CD4-positive, alpha-beta T cell (primary cell): ENCODE measurements at regions of chr9 and their contacts with region 1.

Region 1: GRCh38 chr9:121169094-121169601 is 32.5 kb downstream of the RAB14 start:
- DNase-seq: peak in 7 of 14 experiments; percentile 1 to 60 (median 31)
- ATAC-seq: peak; percentile 95
- H3K4me3 ChIP-seq: no peak overlapping the region
- H3K4me3 Mint-ChIP-seq: peak overlapping the region; percentile 2
- H3K27ac ChIP-seq: peak overlapping the region; percentile 0 to 3
- H3K27ac Mint-ChIP-seq: peak overlapping the region; percentile 80
- H3K4me1 ChIP-seq: peaks cover 11% of the 10 kb centered on the region
- H3K4me1 Mint-ChIP-seq: peaks cover 27% of the 10 kb centered on the region
- H3K27me3 ChIP-seq: no peaks in the 10 kb centered on the region
- H3K27me3 Mint-ChIP-seq: no peaks in the 10 kb centered on the region
- CTCF ChIP-seq: peak; percentile 66

Region 2: GRCh38 chr9:119961774-119962424 is 1207.2 kb before region 1 on chr9:
- CTCF ChIA-PET with region 1: no interaction called
- POLR2A ChIA-PET with region 1: no interaction called
- intact Hi-C with region 1: no loop called
- DNase-seq: no peak
- ATAC-seq: no peak
- H3K4me3 ChIP-seq: no peak overlapping the region
- H3K4me3 Mint-ChIP-seq: no peak overlapping the region
- H3K27ac ChIP-seq: no peak overlapping the region
- H3K27ac Mint-ChIP-seq: no peak overlapping the region
- H3K4me1 ChIP-seq: no peaks in the 10 kb centered on the region
- H3K4me1 Mint-ChIP-seq: no peaks in the 10 kb centered on the region
- H3K27me3 ChIP-seq: peaks cover 0 to 2% of the 10 kb centered on the region in 2 experiments
- H3K27me3 Mint-ChIP-seq: peaks cover 17% of the 10 kb centered on the region
- CTCF ChIP-seq: no peak

Region 3: GRCh38 chr9:120383999-120384924 is 784.9 kb before region 1 on chr9:
- CTCF ChIA-PET with region 1: no interaction called
- POLR2A ChIA-PET with region 1: no interaction called
- intact Hi-C with region 1: no loop called
- DNase-seq: peak in 1 of 14 experiments; percentile 16
- ATAC-seq: no peak
- H3K4me3 ChIP-seq: no peak overlapping the region
- H3K4me3 Mint-ChIP-seq: no peak overlapping the region
- H3K27ac ChIP-seq: no peak overlapping the region
- H3K27ac Mint-ChIP-seq: no peak overlapping the region
- H3K4me1 ChIP-seq: no peaks in the 10 kb centered on the region
- H3K4me1 Mint-ChIP-seq: no peaks in the 10 kb centered on the region
- H3K27me3 ChIP-seq: no peaks in the 10 kb centered on the region
- H3K27me3 Mint-ChIP-seq: no peaks in the 10 kb centered on the region
- CTCF ChIP-seq: no peak

Region 4: DNA sequence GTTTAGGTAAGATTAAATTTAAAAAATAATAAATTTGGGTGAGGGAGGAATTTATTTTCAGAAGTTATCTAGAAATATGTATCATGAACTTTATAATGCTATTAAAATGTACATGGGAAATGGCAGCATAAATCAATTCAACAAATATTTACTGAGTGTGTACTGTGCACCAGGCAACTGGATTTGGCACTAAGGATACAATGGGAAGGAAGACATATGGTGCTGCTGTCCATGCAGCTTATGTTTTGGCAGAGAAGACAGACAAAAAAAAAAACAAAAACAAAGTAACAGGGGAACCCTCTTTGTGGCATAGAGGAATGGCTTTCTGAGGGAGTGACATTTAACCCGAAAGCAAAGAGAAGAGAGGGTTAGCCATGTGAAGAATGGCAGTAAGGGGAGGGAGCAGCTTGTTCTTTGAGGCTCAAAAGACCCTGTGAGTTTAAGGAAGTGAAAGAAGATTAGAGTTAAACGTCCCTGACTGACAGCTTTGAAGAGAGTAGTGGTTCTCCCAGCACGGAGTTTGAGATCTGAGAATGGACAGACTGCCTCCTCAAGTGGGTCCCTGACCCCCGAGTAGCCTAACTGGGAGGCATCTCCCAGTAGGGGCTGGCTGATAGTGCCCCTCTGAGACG is 70.5 kb before region 1 on chr9:
- CTCF ChIA-PET with region 1: no interaction called
- POLR2A ChIA-PET with region 1: no interaction called
- intact Hi-C with region 1: no loop called
- DNase-seq: no peak
- ATAC-seq: no peak
- H3K4me3 ChIP-seq: no peak overlapping the region
- H3K4me3 Mint-ChIP-seq: no peak overlapping the region
- H3K27ac ChIP-seq: no peak overlapping the region
- H3K27ac Mint-ChIP-seq: no peak overlapping the region
- H3K4me1 ChIP-seq: no peaks in the 10 kb centered on the region
- H3K4me1 Mint-ChIP-seq: no peaks in the 10 kb centered on the region
- H3K27me3 ChIP-seq: no peaks in the 10 kb centered on the region
- H3K27me3 Mint-ChIP-seq: no peaks in the 10 kb centered on the region
- CTCF ChIP-seq: no peak

Region 5: GRCh38 chr9:121156263-121156731 is 12.9 kb before region 1 on chr9:
- CTCF ChIA-PET with region 1: interaction called, 6 read pairs
- POLR2A ChIA-PET with region 1: interaction called, 3 read pairs
- intact Hi-C with region 1: loop called in 1 of 2 experiments (anchors 2 kb)
- DNase-seq: peak in 3 of 14 experiments; percentile 16 to 50 (median 21)
- ATAC-seq: peak; percentile 48
- H3K4me3 ChIP-seq: no peak overlapping the region
- H3K4me3 Mint-ChIP-seq: no peak overlapping the region
- H3K27ac ChIP-seq: no peak overlapping the region
- H3K27ac Mint-ChIP-seq: peak overlapping the region; percentile 74
- H3K4me1 ChIP-seq: no peaks in the 10 kb centered on the region
- H3K4me1 Mint-ChIP-seq: peaks cover 28% of the 10 kb centered on the region
- H3K27me3 ChIP-seq: no peaks in the 10 kb centered on the region
- H3K27me3 Mint-ChIP-seq: no peaks in the 10 kb centered on the region
- CTCF ChIP-seq: no peak

Region 6: DNA sequence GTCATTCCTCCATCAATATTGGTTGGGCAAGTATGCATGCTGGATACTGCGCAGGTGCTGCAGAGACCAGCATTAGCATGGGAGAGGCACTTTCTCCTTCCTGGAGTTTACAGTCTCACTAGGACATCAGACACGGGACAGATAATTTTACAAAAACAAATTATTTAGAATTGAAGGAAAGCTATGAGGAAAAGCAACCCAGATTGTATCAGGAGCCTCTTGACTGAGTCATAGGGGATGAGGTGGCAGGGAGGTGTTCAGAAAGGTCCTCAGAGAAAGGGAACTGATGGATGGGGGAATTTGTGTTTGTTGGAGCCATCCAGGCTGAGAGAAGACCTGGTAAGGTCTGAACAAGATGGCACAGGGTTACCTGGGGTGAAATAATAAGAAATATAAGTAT is 57.0 kb after region 1 on chr9:
- CTCF ChIA-PET with region 1: no interaction called
- POLR2A ChIA-PET with region 1: no interaction called
- intact Hi-C with region 1: no loop called
- DNase-seq: no peak
- ATAC-seq: no peak
- H3K4me3 ChIP-seq: no peak overlapping the region
- H3K4me3 Mint-ChIP-seq: no peak overlapping the region
- H3K27ac ChIP-seq: no peak overlapping the region
- H3K27ac Mint-ChIP-seq: no peak overlapping the region
- H3K4me1 ChIP-seq: no peaks in the 10 kb centered on the region
- H3K4me1 Mint-ChIP-seq: no peaks in the 10 kb centered on the region
- H3K27me3 ChIP-seq: no peaks in the 10 kb centered on the region
- H3K27me3 Mint-ChIP-seq: no peaks in the 10 kb centered on the region
- CTCF ChIP-seq: no peak